ENCODE measurements at regions of chr7 and their contacts with region 1.

Region 1: GRCh38 chr7:142771353-142771723 is 568 bp downstream of the PRSS2 start:
- DNase-seq: peak; percentile 91
- H3K4me3 ChIP-seq: peak overlapping the region; percentile 7
- H3K27ac ChIP-seq: peak overlapping the region; percentile 78
- H3K4me1 ChIP-seq: peaks cover 35% of the 10 kb centered on the region
- CTCF ChIP-seq: no peak

Region 2: GRCh38 chr7:142711746-142712619 is 59.4 kb before region 1 on chr7:
- CTCF ChIA-PET with region 1: interaction called, 7 read pairs
- POLR2A ChIA-PET with region 1: interaction called, 23 read pairs
- intact Hi-C with region 1: loop called (anchors 1 kb)
- DNase-seq: peak; percentile 74
- H3K4me3 ChIP-seq: peak overlapping the region; percentile 58
- H3K27ac ChIP-seq: no peak overlapping the region
- H3K4me1 ChIP-seq: peaks cover 46% of the 10 kb centered on the region
- CTCF ChIP-seq: peak; percentile 98

Region 3: GRCh38 chr7:142733271-142733670 is 38.1 kb before region 1 on chr7:
- CTCF ChIA-PET with region 1: no interaction called
- POLR2A ChIA-PET with region 1: interaction called, 4 read pairs
- intact Hi-C with region 1: loop called (anchors 1 kb)
- DNase-seq: peak; percentile 33
- H3K4me3 ChIP-seq: no peak overlapping the region
- H3K27ac ChIP-seq: no peak overlapping the region
- H3K4me1 ChIP-seq: peaks cover 11% of the 10 kb centered on the region
- CTCF ChIP-seq: no peak

Region 4: DNA sequence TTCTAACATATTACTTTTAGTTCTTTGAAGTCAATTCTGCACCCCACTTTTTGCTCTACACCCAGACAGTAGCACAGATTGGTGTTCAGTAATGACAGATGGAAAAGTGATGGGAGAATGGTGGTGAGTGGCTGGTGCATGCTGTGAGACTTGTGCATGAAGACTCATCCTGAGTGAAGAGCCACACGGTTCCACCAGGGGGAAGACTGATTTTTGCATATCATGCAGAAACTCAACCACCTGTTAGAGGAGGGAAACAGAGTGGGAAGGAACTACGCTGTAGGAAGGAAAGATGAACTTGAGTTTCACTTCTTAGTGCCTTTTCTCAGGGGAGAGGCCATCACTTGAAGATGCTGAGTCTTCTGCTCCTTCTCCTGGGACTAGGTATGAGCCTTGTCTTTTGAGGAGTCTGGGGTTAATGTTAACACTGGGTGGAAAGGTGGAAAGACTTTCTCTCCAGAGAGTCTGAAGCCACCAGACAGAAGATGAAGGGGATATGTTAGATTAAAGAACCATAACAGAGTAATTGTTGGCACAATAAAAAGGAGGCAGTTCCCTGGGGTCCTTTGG is 31.3 kb before region 1 on chr7:
- CTCF ChIA-PET with region 1: no interaction called
- POLR2A ChIA-PET with region 1: no interaction called
- intact Hi-C with region 1: loop called (anchors 2 kb)
- DNase-seq: peak; percentile 84
- H3K4me3 ChIP-seq: peak overlapping the region; percentile 10
- H3K27ac ChIP-seq: no peak overlapping the region
- H3K4me1 ChIP-seq: peaks cover 28% of the 10 kb centered on the region
- CTCF ChIP-seq: peak; percentile 75

Measured in OCI-LY7 (cell line).